Left colon (tissue), 2 donors: ENCODE measurements at regions of chr21 and their contacts with region 1.

Region 1: GRCh38 chr21:42537106-42537742 is 23.6 kb downstream of the SLC37A1 start:
- DNase-seq: no peak
- ATAC-seq: no peak

Region 2: GRCh38 chr21:42463861-42464520 is 73.2 kb before region 1 on chr21:
- intact Hi-C with region 1: loop called in 1 of 2 experiments (anchors 5 kb)
- DNase-seq: peak; percentile 48 to 55
- ATAC-seq: no peak

Region 3: GRCh38 chr21:42956819-42957632 is 419.8 kb after region 1 on chr21:
- intact Hi-C with region 1: no loop called
- DNase-seq: no peak
- ATAC-seq: no peak

Region 4: DNA sequence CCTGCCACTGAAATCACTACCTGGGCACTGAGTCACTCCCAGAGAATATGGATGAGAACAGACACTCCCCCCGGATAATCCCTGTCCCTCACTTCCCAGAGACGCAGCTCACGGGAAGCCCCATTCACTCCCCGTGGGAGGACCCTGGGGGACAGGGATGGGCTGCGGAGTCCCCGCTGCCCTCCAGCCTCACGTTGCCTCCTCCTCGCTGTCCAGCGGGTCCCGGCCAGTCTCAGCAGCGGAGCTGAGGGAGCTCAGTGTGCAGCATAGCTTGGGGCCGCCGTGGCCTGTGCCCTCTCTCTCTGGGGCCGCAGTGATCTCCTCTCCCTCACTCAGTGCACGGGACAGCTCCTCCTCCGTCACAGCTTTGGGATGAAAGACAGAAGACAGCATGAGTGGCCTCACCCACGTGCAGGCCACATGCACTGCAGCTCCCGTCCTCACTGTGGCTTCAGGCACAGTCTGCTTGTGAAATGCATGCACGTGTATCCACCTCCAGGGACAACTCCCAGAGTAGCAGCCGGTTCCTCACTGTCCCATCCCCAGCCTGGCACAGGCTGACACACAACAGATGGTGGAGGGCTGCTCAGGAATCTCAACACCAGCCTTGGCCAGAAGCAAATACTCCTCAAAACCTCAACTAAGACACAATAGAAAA is 1794.6 kb after region 1 on chr21:
- intact Hi-C with region 1: no loop called
- DNase-seq: no peak
- ATAC-seq: no peak